ENCODE measurements at regions of chr1 and their contacts with region 1.

Region 1: DNA sequence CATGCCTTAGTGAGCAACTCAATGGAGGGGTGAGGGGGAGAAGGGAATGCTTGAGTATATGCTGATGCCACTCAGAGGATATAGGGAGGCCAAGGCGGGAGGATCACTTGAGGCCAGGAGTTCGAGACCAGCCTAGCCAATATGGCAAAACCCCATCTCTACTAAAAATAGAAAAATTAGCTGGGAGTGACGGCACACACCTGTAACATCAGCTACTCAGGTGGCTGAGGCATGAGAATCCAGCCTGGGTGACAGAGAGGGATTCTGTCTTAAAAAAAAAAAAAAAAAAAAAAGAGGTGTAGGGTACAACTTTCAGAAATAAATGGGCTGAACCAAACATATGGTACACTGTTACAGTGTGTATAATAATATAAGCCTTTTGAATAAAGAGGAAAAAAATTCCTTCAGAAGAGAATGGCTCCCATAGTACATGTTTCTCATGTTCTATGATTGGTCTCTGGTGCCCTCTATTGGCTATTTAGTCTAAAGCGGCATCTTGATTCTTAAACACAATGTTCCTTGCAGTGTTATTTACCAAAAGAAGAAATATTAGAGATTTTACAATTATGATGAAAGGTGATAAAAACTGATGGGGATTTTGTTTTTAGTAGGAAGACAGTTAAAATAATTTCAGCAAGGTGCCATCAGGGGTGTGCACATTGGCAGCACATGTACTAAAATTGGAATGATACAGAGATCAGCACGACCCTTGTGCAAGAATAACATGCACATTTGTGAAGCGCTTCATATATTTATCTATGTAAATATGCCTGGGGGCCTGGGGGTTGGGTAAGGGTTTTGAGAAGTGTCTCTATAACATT is 109.8 kb downstream of the PATJ start:
- DNase-seq: peak in 7 of 9 donors; percentile 19 to 61 (median 56)
- ATAC-seq: peak; percentile 68
- H3K4me3 ChIP-seq: no peak overlapping the region
- H3K4me3 Mint-ChIP-seq: no peak overlapping the region
- H3K27ac ChIP-seq: no peak overlapping the region
- H3K27ac Mint-ChIP-seq: peak overlapping the region in 2 of 9 donors; percentile 3 to 32
- H3K4me1 ChIP-seq: no peaks in the 10 kb centered on the region
- H3K4me1 Mint-ChIP-seq: peaks cover 0 to 3% (median 0%) of the 10 kb centered on the region in 7 donors
- H3K27me3 ChIP-seq: no peaks in the 10 kb centered on the region
- H3K27me3 Mint-ChIP-seq: no peaks in the 10 kb centered on the region

Region 2: GRCh38 chr1:59971464-59971911 is 1880.6 kb before region 1 on chr1:
- CTCF ChIA-PET with region 1: no interaction called
- POLR2A ChIA-PET with region 1: no interaction called
- intact Hi-C with region 1: loop called in 1 of 2 experiments (anchors 2 kb)
- DNase-seq: peak in 7 of 9 donors; percentile 22 to 63 (median 36)
- ATAC-seq: peak; percentile 64
- H3K4me3 ChIP-seq: no peak overlapping the region
- H3K4me3 Mint-ChIP-seq: peak overlapping the region in 2 of 10 donors; percentile 20 to 71
- H3K27ac ChIP-seq: no peak overlapping the region
- H3K27ac Mint-ChIP-seq: no peak overlapping the region
- H3K4me1 ChIP-seq: peaks cover 0 to 6% of the 10 kb centered on the region in 2 donors
- H3K4me1 Mint-ChIP-seq: peaks cover 0 to 7% (median 5%) of the 10 kb centered on the region in 7 donors
- H3K27me3 ChIP-seq: peaks cover 0 to 5% of the 10 kb centered on the region in 2 donors
- H3K27me3 Mint-ChIP-seq: peaks cover 16 to 44% (median 31%) of the 10 kb centered on the region in 5 donors

Region 3: GRCh38 chr1:60978421-60979357 is 873.4 kb before region 1 on chr1:
- CTCF ChIA-PET with region 1: no interaction called
- POLR2A ChIA-PET with region 1: no interaction called
- intact Hi-C with region 1: loop called in 1 of 2 experiments (anchors 1 kb)
- DNase-seq: peak in 6 of 9 donors; percentile 9 to 45 (median 28)
- ATAC-seq: peak; percentile 53
- H3K4me3 ChIP-seq: no peak overlapping the region
- H3K4me3 Mint-ChIP-seq: no peak overlapping the region
- H3K27ac ChIP-seq: no peak overlapping the region
- H3K27ac Mint-ChIP-seq: no peak overlapping the region
- H3K4me1 ChIP-seq: no peaks in the 10 kb centered on the region
- H3K4me1 Mint-ChIP-seq: peaks cover 0 to under 1% (median 0%) of the 10 kb centered on the region in 7 donors
- H3K27me3 ChIP-seq: peaks cover 0 to 3% of the 10 kb centered on the region in 2 donors
- H3K27me3 Mint-ChIP-seq: peaks cover 0 to 9% (median 1%) of the 10 kb centered on the region in 5 donors

Region 4: GRCh38 chr1:61202854-61203598 is 649.0 kb before region 1 on chr1:
- CTCF ChIA-PET with region 1: no interaction called
- POLR2A ChIA-PET with region 1: no interaction called
- intact Hi-C with region 1: loop called in 1 of 2 experiments (anchors 10 kb)
- DNase-seq: no peak
- ATAC-seq: no peak
- H3K4me3 ChIP-seq: no peak overlapping the region
- H3K4me3 Mint-ChIP-seq: no peak overlapping the region
- H3K27ac ChIP-seq: no peak overlapping the region
- H3K27ac Mint-ChIP-seq: no peak overlapping the region
- H3K4me1 ChIP-seq: no peaks in the 10 kb centered on the region
- H3K4me1 Mint-ChIP-seq: no peaks in the 10 kb centered on the region
- H3K27me3 ChIP-seq: no peaks in the 10 kb centered on the region
- H3K27me3 Mint-ChIP-seq: peaks cover 0 to 16% (median 3%) of the 10 kb centered on the region in 5 donors

Region 5: DNA sequence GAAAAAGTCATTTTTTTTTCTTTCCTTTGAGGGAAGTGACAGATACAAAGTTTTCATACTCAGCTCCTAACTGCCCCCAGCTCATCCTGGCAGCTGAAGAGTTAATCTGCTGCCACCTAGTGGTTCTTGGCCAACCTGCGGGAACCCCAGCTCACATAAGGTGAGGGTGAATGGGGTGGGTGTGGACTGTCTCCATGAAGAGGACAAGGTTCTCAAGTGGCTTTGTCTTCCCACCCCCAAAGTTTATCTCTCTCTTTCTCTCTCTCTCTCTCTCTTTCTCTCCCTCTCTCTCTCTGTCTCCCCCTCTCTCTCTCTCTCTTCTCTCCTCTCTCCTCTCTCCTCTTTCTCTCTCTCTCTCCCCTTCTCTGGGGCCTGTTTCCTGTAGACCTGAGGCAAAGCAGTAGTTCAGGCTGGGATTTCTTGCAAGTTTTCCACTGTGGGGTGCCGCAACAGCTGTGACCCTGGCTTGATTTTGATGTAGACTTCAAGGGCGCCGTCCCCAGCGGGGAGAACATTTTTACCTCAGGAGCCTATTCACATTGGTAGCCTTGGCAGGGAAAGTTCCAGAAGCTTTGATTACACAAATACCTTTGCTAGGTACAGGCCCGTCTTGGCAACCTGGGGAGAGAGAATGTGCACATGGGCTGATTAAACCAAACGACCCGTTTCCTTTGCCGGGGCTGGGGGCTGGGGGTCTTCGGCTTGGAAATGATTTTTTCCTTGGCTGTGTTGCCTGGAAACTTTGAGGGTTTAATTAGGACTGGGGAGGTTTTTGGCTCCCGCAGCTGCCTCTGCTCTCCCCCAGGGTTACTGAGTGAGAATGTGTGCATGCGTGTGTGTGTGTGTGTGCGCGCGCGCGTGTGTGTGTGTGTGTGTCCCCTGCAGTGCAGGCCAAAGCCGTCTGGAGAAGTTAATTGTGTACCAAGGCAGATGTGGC is 263.1 kb before region 1 on chr1:
- CTCF ChIA-PET with region 1: no interaction called
- POLR2A ChIA-PET with region 1: no interaction called
- intact Hi-C with region 1: loop called (anchors 1 to 5 kb)
- DNase-seq: peak in 8 of 9 donors; percentile 7 to 53 (median 46)
- ATAC-seq: peak; percentile 74
- H3K4me3 ChIP-seq: no peak overlapping the region
- H3K4me3 Mint-ChIP-seq: no peak overlapping the region
- H3K27ac ChIP-seq: no peak overlapping the region
- H3K27ac Mint-ChIP-seq: no peak overlapping the region
- H3K4me1 ChIP-seq: no peaks in the 10 kb centered on the region
- H3K4me1 Mint-ChIP-seq: peaks cover 0 to 3% (median 0%) of the 10 kb centered on the region in 7 donors
- H3K27me3 ChIP-seq: no peaks in the 10 kb centered on the region
- H3K27me3 Mint-ChIP-seq: peaks cover 0 to 10% (median 8%) of the 10 kb centered on the region in 5 donors

Region 6: DNA sequence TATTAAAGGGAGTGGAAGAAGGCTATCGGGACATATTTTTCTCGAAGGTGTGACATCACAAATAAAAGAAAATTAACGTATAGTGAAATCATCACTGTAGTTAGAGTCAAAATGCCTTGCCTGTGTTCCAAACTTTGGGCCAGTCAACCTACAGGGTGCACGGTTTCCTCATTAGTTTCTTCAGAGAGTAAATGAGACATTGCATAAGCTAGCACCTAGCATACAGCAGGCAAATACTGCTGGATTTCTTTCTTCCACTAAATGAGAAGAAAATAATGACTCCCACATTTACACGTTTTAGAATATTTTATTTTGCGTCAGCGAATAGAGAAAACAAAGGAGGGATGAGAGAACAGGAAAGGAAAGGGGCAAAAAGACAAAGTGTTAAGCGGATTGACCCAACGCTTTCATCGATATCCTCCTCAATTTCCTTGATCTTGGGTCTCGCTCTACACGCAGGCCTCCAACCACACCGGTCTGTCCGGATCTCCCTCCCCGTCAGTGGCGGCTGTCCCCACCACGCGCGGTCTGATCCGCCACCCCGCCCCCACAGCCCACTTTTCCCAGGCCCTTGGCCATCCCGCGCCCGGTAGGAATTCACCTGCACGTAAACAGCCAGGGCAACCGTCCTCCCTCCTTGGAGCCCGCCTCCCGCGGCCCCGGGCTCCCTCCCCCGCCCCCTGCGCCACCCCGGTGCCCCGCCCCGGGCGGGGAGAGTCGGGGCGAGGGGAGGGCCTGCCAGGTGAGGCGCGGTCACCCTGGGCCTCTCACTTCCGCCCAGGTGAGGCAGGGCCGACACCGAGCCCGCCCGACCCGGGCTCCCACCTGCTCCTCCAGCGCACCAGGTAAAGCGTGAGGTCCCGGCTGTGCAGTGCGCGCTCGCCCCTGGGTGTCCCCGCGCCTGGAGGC is 110.1 kb before region 1 on chr1 and contains the start of gene PATJ:
- CTCF ChIA-PET with region 1: no interaction called
- POLR2A ChIA-PET with region 1: no interaction called
- intact Hi-C with region 1: loop called in 1 of 2 experiments (anchors 5 kb)
- DNase-seq: peak; percentile 56 to 78 (median 73)
- ATAC-seq: peak; percentile 93
- H3K4me3 ChIP-seq: peak within 1 kb of the TSS; percentile 62
- H3K4me3 Mint-ChIP-seq: peak within 1 kb of the TSS; percentile 94 to 100 (median 97)
- H3K27ac ChIP-seq: peak within 1 kb of the TSS; percentile 76
- H3K27ac Mint-ChIP-seq: peak within 1 kb of the TSS; percentile 88 to 99 (median 96)
- H3K4me1 ChIP-seq: peaks cover 9 to 13% of the 10 kb centered on the region in 2 donors
- H3K4me1 Mint-ChIP-seq: peaks cover 17 to 46% (median 35%) of the 10 kb centered on the region in 7 donors
- H3K27me3 ChIP-seq: no peaks in the 10 kb centered on the region
- H3K27me3 Mint-ChIP-seq: no peaks in the 10 kb centered on the region
- total RNA-seq, gene PATJ: 13.4 to 64.5 (median 34.0) TPM